ENCODE measurements at regions of chr17 and their contacts with region 1.

Region 1: GRCh38 chr17:3668279-3669085 is at the starts of genes EMC6 and TAX1BP3:
- DNase-seq: peak; percentile 98
- H3K4me3 Mint-ChIP-seq: peak within 1 kb of the TSS; percentile 93
- H3K27ac Mint-ChIP-seq: peak within 1 kb of the TSS; percentile 79
- H3K4me1 Mint-ChIP-seq: peaks cover 14% of the 10 kb centered on the region
- H3K27me3 Mint-ChIP-seq: no peaks in the 10 kb centered on the region
- total RNA-seq, gene EMC6: 41.8 to 44.0 TPM
- total RNA-seq, gene TAX1BP3: 17.7 to 19.3 TPM

Region 2: DNA sequence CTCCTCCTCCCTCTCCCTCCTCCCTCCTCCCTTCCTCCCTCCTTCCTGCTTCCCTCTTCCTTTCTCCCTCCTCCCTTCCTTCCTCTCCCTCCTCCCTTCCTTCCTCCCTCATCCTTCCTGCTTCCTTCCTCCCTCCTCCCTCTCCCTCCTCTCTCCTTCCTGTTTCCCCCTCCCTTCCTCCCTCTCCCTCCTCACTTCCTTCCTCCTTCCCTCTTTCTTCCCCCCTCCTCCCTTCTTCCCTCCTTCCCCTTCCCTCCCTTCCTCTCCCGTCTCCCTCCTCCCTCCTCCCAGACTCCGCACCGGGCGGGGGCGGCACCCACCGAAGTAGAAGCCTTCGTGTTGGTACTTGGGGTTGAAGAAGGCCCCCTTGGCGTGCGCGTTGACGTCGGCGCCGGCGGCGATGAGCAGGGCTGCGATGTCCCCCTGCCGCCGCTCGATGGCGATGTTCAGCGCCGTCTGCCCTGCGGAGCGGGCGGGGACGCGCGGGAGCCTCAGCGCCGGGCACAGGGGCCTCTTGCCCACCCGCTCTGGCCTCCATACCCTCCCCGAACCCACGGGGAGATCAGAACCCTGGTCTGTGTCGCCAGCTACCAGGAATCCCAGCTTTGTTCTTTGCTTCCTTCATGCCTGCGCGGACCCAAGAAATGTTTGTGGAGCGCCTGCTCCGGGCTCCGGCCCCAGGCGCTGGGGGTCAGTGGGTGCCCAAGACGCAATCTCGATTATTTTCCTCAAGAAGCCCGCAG is 133.1 kb before region 1 on chr17:
- CTCF ChIA-PET with region 1: no interaction called
- intact Hi-C with region 1: loop called (anchors 1 kb)
- DNase-seq: peak; percentile 71
- H3K4me3 Mint-ChIP-seq: peak overlapping the region; percentile 54
- H3K27ac Mint-ChIP-seq: no peak overlapping the region
- H3K4me1 Mint-ChIP-seq: peaks cover 3% of the 10 kb centered on the region
- H3K27me3 Mint-ChIP-seq: peaks cover 4% of the 10 kb centered on the region

Region 3: GRCh38 chr17:3636154-3636907 is 32.2 kb before region 1 on chr17 and contains the starts of genes CTNS and SHPK:
- CTCF ChIA-PET with region 1: no interaction called
- intact Hi-C with region 1: loop called (anchors 1 kb)
- DNase-seq: peak; percentile 95
- H3K4me3 Mint-ChIP-seq: peak within 1 kb of the TSS; percentile 95
- H3K27ac Mint-ChIP-seq: peak within 1 kb of the TSS; percentile 99
- H3K4me1 Mint-ChIP-seq: peaks cover 30% of the 10 kb centered on the region
- H3K27me3 Mint-ChIP-seq: no peaks in the 10 kb centered on the region
- total RNA-seq, gene CTNS: 4.5 TPM
- total RNA-seq, gene SHPK: 6.9 to 7.5 TPM

Region 4: DNA sequence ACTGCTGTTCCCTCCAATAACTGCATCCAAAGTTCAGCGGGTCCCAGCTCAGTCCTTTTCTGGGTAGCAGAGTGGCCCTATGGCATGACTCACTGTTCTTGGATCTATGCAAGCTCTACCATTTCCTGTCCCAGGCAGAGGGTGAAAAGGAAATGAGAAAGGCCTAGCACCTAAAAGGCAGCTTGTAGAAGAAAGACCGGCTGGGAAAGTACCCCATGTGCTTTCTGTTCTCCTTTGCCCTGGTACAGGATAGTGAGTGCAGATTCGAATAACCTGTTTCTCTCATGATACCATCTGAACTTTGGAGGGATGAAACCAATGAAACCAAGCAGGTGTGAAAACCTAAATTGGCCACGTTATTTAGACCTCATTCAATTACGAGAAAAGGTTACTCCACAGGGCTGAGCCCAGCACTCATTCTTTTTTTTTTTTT is 42.5 kb after region 1 on chr17:
- CTCF ChIA-PET with region 1: no interaction called
- intact Hi-C with region 1: loop called (anchors 1 kb)
- DNase-seq: peak; percentile 89
- H3K4me3 Mint-ChIP-seq: no peak overlapping the region
- H3K27ac Mint-ChIP-seq: peak overlapping the region; percentile 87
- H3K4me1 Mint-ChIP-seq: peaks cover 46% of the 10 kb centered on the region
- H3K27me3 Mint-ChIP-seq: no peaks in the 10 kb centered on the region